Activated naive CD4-positive, alpha-beta T cell treated with anti-CD3 and anti-CD28 coated beads, Interleukin-2, amount 10 ng/mL, durations not matched to agents 7 days and 5 days (primary cell): ENCODE measurements at regions of chr3 and their contacts with region 1.

Region 1: DNA sequence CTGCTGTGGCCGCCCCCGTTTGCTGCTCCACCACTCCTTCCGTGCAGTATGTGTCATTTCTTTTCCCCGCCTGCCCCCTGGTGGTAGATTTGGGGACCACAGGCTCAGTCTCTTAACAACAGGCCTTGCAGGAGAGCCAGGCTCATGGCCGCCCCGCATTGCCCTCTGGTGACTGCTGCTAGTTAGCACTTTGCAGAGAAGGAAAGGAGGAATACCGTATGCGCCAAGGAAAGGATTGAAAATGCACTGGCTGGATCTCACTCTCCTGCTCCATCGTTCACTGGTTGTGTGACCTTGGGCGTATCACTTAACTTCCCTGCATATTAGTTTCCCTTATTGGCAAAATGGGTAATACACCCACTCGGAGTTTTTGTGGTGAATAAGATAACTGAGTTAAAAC is 39.3 kb upstream of the PXYLP1 start:
- DNase-seq: peak; percentile 98
- H3K4me3 Mint-ChIP-seq: no peak overlapping the region
- H3K27ac Mint-ChIP-seq: no peak overlapping the region
- H3K4me1 Mint-ChIP-seq: peaks cover 11% of the 10 kb centered on the region
- H3K27me3 Mint-ChIP-seq: peaks cover 41% of the 10 kb centered on the region

Region 2: DNA sequence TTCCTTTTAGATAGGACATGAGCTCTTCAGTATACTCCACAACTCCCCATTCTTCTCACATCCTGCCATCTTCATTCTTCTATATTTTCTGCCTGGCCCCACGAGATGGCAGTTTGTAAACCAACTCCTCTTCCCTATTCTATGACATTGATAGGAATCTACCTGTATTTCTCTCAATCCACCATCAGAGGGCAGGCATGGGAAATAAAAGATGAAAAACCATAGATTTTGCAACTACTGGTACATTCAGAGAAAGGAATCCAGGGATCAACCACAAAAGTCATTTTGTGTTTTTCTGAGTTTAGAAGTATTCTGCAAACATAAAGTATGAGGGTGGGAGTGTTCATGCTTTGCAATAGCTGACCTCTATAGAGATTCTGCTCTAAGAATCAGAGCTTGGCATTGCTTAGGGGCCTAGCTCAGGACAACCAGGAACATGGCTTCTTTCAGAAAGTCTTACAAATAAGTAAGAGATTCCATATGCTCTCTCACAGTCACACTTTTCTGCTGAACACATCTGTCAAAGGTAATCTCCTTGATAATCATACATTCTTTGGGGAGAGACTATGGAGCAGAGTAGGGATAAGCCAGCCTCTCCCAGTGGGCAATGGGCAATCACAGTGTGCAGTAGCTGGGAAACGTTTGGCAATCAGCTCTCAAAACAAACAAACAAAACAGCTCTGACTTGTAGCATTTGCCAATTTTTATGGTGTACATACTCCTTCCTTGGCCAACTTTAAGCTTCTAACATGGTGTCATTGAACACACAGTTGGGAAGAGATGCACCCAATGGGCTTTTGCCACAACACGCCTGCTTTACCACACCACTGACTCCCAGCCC is 293.8 kb before region 1 on chr3:
- CTCF ChIA-PET with region 1: interaction called, 12 read pairs
- DNase-seq: peak; percentile 27
- H3K4me3 Mint-ChIP-seq: no peak overlapping the region
- H3K27ac Mint-ChIP-seq: no peak overlapping the region
- H3K4me1 Mint-ChIP-seq: no peaks in the 10 kb centered on the region
- H3K27me3 Mint-ChIP-seq: peaks cover 10% of the 10 kb centered on the region

Region 3: DNA sequence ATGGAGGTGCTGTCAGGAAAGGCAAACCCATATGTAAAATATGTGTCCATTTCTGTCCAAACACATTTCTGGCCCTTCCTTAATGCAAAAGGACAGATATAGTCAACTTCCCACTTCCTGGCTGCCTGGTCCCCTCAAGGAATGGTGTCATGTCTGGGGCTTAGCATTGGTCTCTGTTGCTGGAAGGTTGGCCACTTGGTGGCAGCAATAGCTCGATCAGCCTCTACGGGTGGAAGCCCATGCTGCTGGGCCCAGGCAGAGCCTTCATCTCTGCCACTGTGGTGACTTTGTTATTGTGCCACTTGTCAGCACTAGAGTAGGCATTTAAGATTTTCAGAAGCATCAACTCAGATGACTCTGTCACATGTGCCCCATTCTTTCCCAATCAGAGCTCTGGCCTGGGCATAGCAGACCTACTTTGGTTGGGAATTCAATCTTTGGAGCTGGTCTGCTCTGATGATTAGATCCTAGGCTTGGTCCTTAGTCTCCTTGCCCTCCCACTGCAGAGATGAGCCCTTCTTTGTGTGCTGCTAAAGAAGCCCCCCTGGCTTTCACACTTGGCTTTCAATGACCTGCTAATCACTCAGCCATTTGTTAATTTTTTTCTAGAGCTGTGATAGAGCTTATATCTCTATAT is 192.2 kb before region 1 on chr3:
- CTCF ChIA-PET with region 1: interaction called, 69 read pairs
- DNase-seq: peak; percentile 61
- H3K4me3 Mint-ChIP-seq: no peak overlapping the region
- H3K27ac Mint-ChIP-seq: no peak overlapping the region
- H3K4me1 Mint-ChIP-seq: peaks cover 5% of the 10 kb centered on the region
- H3K27me3 Mint-ChIP-seq: peaks cover 7% of the 10 kb centered on the region

Region 4: DNA sequence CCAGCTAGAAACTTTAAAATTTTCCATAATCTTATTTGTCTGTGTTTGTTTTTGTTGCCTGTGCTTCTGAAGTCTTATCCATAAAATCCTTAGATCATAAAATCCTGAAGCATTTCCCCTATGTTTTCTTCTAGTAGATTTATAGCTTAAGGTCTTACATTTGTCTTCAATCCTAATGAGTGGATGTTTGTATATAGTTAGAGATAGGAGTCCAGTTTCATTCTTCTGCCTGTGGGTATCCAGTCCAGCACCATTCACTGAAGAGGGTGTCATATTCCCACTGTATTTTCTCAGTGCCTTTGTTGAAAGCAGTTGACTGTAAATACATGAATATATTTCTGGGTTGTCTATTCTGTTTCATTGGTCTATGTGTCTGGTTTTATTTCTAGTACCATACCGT is 186.0 kb before region 1 on chr3:
- CTCF ChIA-PET with region 1: interaction called, 40 read pairs
- DNase-seq: no peak
- H3K4me3 Mint-ChIP-seq: no peak overlapping the region
- H3K27ac Mint-ChIP-seq: no peak overlapping the region
- H3K4me1 Mint-ChIP-seq: no peaks in the 10 kb centered on the region
- H3K27me3 Mint-ChIP-seq: peaks cover 13% of the 10 kb centered on the region

Region 5: GRCh38 chr3:141011232-141011996 is 180.9 kb before region 1 on chr3:
- CTCF ChIA-PET with region 1: interaction called, 40 read pairs
- DNase-seq: peak; percentile 85
- H3K4me3 Mint-ChIP-seq: no peak overlapping the region
- H3K27ac Mint-ChIP-seq: no peak overlapping the region
- H3K4me1 Mint-ChIP-seq: no peaks in the 10 kb centered on the region
- H3K27me3 Mint-ChIP-seq: peaks cover 33% of the 10 kb centered on the region

Region 6: DNA sequence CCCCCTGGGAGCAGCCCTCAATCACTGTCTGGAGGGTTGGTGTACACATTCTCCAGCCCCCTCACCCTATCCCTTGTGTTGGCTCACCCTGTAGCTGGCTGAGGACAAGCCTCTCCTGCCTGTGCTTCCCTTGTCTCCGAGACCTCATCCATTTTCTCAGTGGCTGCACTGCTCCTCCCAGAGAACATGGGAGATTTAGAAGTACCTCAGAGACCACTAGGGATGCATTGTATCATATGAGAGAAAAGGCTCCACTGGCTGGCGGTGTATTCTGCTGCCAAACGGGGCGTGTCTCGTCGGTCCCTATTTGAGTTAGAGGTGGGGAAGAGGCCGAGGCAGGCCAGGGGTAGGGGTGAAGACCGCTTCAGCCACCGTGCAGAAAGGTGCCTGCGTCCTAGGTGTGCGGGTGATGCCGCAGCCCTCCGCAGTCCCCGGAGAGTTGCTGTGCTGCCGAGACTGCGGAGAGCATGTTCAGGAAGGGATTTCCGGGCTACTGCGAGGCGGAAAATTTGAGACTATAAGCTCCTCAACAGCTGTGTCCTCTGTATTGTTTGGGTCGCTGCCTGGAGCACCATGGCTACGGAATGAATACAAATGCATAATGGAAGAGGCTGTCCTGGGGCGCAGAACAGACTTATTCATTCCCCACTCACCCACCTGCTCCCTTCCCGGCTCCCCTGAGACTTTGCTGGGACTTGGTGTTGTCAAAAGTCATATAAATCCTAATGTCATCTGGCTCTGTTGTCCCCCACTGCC is 97.4 kb before region 1 on chr3:
- CTCF ChIA-PET with region 1: no interaction called
- DNase-seq: no peak
- H3K4me3 Mint-ChIP-seq: no peak overlapping the region
- H3K27ac Mint-ChIP-seq: no peak overlapping the region
- H3K4me1 Mint-ChIP-seq: no peaks in the 10 kb centered on the region
- H3K27me3 Mint-ChIP-seq: no peaks in the 10 kb centered on the region

Region 7: DNA sequence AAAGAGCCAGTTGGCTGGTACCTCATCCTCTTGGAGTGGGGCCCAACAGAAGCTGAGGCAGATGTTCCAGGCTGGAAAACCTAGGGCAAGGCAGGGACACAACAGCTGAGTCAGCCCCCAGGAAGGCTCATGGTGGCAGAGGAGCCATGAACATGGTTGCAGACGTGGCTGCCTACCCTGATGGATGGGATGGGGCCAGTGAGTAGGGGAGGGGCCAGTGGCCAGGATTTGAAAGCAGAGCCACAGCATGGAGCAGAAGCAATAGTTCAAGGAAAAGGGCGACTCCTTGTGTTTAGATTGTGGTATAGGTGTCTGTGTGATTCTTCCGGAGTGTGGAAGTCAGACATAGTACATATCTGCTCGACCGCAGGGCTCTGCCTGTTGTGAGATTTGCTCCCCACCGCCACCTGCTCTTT is 63.5 kb after region 1 on chr3:
- CTCF ChIA-PET with region 1: interaction called, 20 read pairs
- DNase-seq: peak; percentile 63
- H3K4me3 Mint-ChIP-seq: no peak overlapping the region
- H3K27ac Mint-ChIP-seq: no peak overlapping the region
- H3K4me1 Mint-ChIP-seq: peaks cover 19% of the 10 kb centered on the region
- H3K27me3 Mint-ChIP-seq: no peaks in the 10 kb centered on the region